Activated CD8-positive, alpha-beta T cell treated with anti-CD3 and anti-CD28 coated beads for 36 hours (primary cell): ENCODE measurements at regions of chr17 and their contacts with region 1.

Region 1: DNA sequence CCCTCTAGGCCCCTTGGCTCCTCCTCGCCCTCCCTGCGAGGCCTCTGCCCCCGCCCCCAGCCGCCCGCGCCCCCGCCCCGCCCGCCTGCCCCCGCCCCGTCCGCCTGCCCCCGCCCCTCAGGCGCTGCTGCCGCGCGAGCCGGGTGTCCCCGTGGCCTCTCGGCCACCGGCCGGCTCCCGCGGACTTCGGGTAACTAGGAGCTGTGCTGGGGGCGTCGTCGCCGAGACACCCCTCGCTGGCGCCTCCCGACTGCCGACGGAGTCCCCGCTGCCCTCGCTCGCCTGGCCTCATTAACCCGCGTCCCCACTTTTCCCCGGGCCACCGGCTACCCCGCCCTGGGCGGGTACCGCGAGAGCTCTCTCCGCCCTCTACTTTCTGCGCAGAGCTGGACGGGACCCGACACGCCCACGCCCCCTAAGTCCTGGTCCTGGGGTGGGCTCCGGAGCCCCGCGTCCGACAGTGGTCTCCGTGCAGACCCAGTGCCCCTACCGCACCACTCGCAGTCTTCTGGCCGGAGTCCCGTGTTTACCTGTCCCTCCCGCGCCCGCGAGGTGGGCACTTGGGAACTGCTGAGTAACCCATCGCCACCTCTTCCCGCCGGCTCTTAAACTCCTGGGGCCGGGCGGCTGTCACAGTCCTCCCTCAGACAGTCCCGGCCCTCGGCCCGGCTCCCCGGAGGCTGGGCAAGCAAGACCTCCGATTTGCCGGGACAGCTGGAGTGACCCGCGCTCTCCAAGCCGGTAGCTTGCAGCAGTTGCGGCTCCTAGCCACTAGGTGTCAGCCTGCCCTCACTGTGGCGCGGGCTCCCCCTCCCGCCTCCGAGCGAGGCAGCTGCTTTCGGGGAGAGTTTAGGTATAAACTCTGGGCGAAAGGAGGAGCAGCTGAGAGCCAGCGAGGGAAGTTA is at the start of gene TLCD1:
- DNase-seq: peak; percentile 95
- ATAC-seq: peak; percentile 50
- H3K4me3 Mint-ChIP-seq: peak within 1 kb of the TSS; percentile 100
- H3K27ac Mint-ChIP-seq: peak within 1 kb of the TSS; percentile 99
- H3K4me1 Mint-ChIP-seq: peaks cover 39% of the 10 kb centered on the region
- H3K27me3 Mint-ChIP-seq: no peaks in the 10 kb centered on the region
- CTCF ChIP-seq: peak; percentile 100
- total RNA-seq, gene TLCD1: 6.5 to 8.7 TPM

Region 2: GRCh38 chr17:28585851-28586250 is 140.6 kb before region 1 on chr17:
- CTCF ChIA-PET with region 1: no interaction called
- POLR2A ChIA-PET with region 1: no interaction called
- intact Hi-C with region 1: no loop called
- DNase-seq: no peak
- ATAC-seq: no peak
- H3K4me3 Mint-ChIP-seq: no peak overlapping the region
- H3K27ac Mint-ChIP-seq: no peak overlapping the region
- H3K4me1 Mint-ChIP-seq: no peaks in the 10 kb centered on the region
- H3K27me3 Mint-ChIP-seq: no peaks in the 10 kb centered on the region
- CTCF ChIP-seq: no peak

Region 3: GRCh38 chr17:28623696-28624095 is 102.8 kb before region 1 on chr17:
- CTCF ChIA-PET with region 1: no interaction called
- POLR2A ChIA-PET with region 1: no interaction called
- intact Hi-C with region 1: no loop called
- DNase-seq: no peak
- ATAC-seq: no peak
- H3K4me3 Mint-ChIP-seq: no peak overlapping the region
- H3K27ac Mint-ChIP-seq: no peak overlapping the region
- H3K4me1 Mint-ChIP-seq: peaks cover 3% of the 10 kb centered on the region
- H3K27me3 Mint-ChIP-seq: no peaks in the 10 kb centered on the region
- CTCF ChIP-seq: no peak

Region 4: DNA sequence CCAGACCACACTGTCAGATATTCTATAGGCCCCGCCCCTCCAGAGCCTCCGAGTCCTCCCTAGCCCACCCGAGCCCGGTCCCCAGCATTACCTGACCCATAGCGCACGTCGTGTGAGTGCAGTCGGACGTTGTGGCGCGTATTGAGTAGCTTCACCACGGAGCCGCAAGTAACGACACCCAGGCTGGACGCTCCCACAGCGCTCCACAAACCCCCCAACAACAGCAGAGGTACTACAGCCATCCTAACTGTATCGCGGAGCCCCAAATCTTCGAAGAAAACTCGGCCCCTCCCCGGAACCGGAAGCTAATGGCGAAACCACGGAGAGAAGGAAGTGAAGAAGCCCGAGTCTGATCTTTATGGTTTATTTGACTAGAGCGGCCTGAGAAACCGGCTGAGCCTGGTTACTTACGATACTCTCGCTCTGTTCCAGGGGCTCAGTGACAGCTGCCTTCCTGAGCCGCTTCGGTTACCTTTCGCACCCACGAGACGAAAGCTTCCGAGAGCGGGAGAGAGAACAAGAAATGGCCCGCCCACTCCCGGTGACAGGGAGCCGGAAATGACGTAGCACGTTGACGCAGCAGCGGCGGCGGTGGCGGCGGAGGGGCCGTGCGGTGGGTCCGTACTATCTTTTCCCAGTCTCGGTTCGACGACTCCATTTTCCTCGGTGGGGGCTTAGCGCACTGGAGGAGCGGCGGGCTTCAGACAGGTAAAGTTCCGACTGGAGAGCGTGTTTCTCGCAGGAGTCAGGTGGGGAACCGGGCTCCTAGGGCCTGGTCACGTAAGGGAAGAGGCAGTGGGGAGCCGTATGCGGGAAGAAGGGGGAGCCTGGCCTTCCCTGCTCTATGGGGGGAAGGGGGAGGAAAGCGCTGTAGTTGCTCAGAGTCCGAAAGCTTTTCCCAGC is 64.6 kb before region 1 on chr17 and contains the starts of genes SDF2 and SUPT6H:
- CTCF ChIA-PET with region 1: interaction called, 11 read pairs
- POLR2A ChIA-PET with region 1: interaction called, 8 read pairs
- intact Hi-C with region 1: no loop called
- DNase-seq: peak; percentile 98
- ATAC-seq: peak; percentile 87
- H3K4me3 Mint-ChIP-seq: peak within 1 kb of the TSS; percentile 97
- H3K27ac Mint-ChIP-seq: peak within 1 kb of the TSS; percentile 100
- H3K4me1 Mint-ChIP-seq: peaks cover 45% of the 10 kb centered on the region
- H3K27me3 Mint-ChIP-seq: no peaks in the 10 kb centered on the region
- CTCF ChIP-seq: no peak
- total RNA-seq, gene SDF2: 37.4 to 39.0 TPM
- total RNA-seq, gene SUPT6H: 60.3 to 63.3 TPM

Region 5: GRCh38 chr17:28777178-28777577 is 50.7 kb after region 1 on chr17:
- CTCF ChIA-PET with region 1: interaction called, 14 read pairs
- POLR2A ChIA-PET with region 1: interaction called, 4 read pairs
- intact Hi-C with region 1: no loop called
- DNase-seq: no peak
- ATAC-seq: no peak
- H3K4me3 Mint-ChIP-seq: no peak overlapping the region
- H3K27ac Mint-ChIP-seq: peak overlapping the region; percentile 23
- H3K4me1 Mint-ChIP-seq: peaks cover 39% of the 10 kb centered on the region
- H3K27me3 Mint-ChIP-seq: no peaks in the 10 kb centered on the region
- CTCF ChIP-seq: no peak

Region 6: GRCh38 chr17:28889996-28890395 is 163.5 kb after region 1 on chr17:
- CTCF ChIA-PET with region 1: interaction called, 11 read pairs
- POLR2A ChIA-PET with region 1: interaction called, 3 read pairs
- intact Hi-C with region 1: no loop called
- DNase-seq: no peak
- ATAC-seq: no peak
- H3K4me3 Mint-ChIP-seq: no peak overlapping the region
- H3K27ac Mint-ChIP-seq: peak overlapping the region; percentile 87
- H3K4me1 Mint-ChIP-seq: peaks cover 47% of the 10 kb centered on the region
- H3K27me3 Mint-ChIP-seq: no peaks in the 10 kb centered on the region
- CTCF ChIP-seq: no peak

Region 7: DNA sequence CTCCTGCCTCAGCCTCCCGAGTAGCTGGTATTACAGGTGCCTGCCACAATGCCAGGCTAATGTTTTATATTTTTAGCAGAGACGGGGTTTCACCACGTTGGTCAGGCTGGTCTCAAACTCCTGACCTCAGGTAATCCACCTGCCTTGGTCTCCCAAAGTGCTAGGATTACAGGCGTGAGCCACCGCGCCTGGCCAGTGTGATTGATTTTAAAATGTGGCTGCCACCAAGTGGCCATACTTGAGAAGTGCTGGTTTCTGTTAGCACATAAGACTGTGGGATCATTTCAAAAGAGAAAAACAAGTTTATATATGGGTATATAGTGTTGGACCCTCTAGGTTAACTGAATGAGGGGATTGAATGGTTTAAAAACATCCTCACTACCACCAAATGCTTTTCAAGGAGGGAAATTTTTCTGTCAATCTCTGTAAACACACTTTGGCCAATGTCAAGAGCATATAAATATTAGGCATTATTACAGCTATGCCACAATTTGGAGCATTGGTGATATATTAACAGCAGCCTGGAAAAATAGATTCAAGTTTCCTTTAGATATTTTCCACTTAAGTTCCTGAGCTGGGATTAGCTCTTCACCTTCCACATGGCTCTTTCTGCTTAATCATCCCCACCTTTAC is 189.9 kb after region 1 on chr17:
- CTCF ChIA-PET with region 1: interaction called, 22 read pairs
- POLR2A ChIA-PET with region 1: interaction called, 3 read pairs
- intact Hi-C with region 1: no loop called
- DNase-seq: peak; percentile 65
- ATAC-seq: peak; percentile 79
- H3K4me3 Mint-ChIP-seq: no peak overlapping the region
- H3K27ac Mint-ChIP-seq: no peak overlapping the region
- H3K4me1 Mint-ChIP-seq: peaks cover 15% of the 10 kb centered on the region
- H3K27me3 Mint-ChIP-seq: no peaks in the 10 kb centered on the region
- CTCF ChIP-seq: peak; percentile 79

Region 8: DNA sequence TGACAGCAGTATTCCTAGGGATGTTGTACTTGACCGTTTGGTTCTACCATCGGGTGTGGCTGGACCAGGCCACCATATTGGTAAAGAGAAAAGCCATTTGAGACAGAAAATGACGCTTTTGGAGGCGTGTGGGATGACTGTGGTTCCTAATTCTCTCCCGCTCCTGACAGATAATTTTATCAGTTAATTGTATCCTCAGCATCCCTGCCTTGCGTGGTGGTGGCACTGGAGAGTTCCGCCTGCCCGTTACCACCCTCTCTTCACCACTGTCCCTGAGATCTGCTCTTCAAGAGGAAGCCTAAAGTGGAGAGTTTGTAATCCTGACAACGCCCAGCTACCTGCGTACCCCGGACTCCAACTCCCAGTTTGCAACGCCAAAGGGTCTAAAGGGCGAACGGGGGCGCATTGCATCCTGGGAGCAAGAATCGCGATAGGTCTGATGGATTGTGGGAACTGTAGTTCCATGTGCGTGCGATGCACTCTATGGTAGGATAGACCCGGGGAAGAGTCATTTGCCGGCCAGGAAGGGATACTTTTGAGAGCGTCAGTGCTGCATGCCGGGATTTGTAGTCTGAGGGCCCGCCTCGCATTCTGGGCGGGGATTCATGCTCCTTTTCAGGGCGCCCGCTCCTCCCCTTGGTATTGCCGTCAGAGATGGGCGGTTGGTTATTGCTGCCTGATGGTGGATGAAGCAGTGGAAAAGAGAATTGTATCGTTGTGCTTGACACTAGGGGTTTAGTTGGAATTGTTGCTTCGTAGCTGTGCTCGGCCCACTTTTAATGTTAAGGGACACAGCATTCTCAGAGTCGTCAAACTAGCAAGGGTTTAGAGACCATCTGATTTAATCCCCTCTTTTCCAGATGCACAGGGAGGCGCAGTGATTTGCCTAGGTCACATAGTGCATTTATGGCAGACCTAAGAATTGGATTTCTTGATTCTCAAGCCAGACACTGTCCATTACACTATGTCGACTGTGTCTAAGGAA is 225.8 kb after region 1 on chr17:
- CTCF ChIA-PET with region 1: interaction called, 66 read pairs
- POLR2A ChIA-PET with region 1: interaction called, 46 read pairs
- intact Hi-C with region 1: loop called (anchors 2 kb)
- DNase-seq: peak; percentile 98
- ATAC-seq: peak; percentile 75
- H3K4me3 Mint-ChIP-seq: no peak overlapping the region
- H3K27ac Mint-ChIP-seq: no peak overlapping the region
- H3K4me1 Mint-ChIP-seq: peaks cover 15% of the 10 kb centered on the region
- H3K27me3 Mint-ChIP-seq: no peaks in the 10 kb centered on the region
- CTCF ChIP-seq: no peak